T-cell (primary cell): ENCODE measurements at regions of chr2 and their contacts with region 1.

Region 1: DNA sequence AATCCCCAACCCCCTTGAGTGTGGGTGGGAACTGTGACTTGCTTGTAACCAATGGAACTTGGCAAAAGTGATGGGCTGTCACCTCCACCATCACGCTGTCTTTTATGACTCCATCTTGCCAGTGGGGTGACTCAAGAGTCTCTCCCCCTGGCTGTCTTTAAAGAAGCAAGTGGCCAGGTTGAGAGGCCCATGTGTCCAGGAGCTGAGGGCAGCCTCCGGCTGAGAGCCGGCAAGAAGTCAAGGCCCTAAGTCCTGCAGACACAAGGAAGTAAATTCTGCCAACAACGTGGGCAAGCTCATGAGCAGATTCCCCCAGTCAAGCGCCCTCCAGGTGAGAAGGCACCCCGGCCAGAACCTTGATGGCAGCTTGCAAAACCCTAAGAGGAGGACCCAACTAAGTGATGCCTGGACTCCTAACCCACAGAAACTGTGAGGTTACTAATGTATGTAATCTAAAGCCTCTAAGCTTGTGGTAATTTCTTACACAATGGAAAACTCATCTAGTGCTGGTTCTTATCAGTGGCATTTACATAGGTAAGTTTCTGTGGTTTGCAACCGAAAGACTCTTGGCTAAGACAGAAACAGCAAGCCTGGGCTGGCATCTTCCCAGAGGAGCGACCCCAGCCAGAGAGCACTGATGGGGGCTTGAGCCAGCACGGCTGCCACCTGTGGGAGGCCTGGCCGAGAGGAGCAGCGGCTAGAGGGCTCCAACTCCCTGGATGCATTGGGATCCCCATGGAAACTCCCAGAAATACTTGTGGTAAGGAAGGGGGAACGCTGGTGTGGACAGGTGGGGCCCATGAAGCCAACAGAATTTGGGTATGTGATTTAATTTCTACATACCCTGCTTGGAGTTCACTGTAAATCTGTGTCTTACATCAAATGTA is 49.3 kb downstream of the CIB4 start:
- DNase-seq: peak in 1 of 35 experiments; percentile 7
- ATAC-seq: no peak
- H3K4me3 ChIP-seq: no peak overlapping the region
- H3K4me3 Mint-ChIP-seq: no peak overlapping the region
- H3K27ac ChIP-seq: no peak overlapping the region
- H3K27ac Mint-ChIP-seq: no peak overlapping the region
- H3K4me1 ChIP-seq: peaks cover 0 to 3% of the 10 kb centered on the region in 2 experiments
- H3K4me1 Mint-ChIP-seq: peaks cover 0 to 3% (median 0%) of the 10 kb centered on the region in 3 donors
- H3K27me3 ChIP-seq: peaks cover 0 to 35% of the 10 kb centered on the region in 2 experiments
- H3K27me3 Mint-ChIP-seq: peaks cover 19 to 28% of the 10 kb centered on the region in 2 donors

Region 2: GRCh38 chr2:26195040-26195984 is 396.6 kb before region 1 on chr2:
- CTCF ChIA-PET with region 1: no interaction called
- POLR2A ChIA-PET with region 1: interaction called in 1 of 2 experiments, 10 read pairs
- DNase-seq: no peak
- ATAC-seq: no peak
- H3K4me3 ChIP-seq: no peak overlapping the region
- H3K4me3 Mint-ChIP-seq: no peak overlapping the region
- H3K27ac ChIP-seq: no peak overlapping the region
- H3K27ac Mint-ChIP-seq: peak overlapping the region; percentile 8 to 13
- H3K4me1 ChIP-seq: no peaks in the 10 kb centered on the region
- H3K4me1 Mint-ChIP-seq: no peaks in the 10 kb centered on the region
- H3K27me3 ChIP-seq: no peaks in the 10 kb centered on the region
- H3K27me3 Mint-ChIP-seq: no peaks in the 10 kb centered on the region

Region 3: DNA sequence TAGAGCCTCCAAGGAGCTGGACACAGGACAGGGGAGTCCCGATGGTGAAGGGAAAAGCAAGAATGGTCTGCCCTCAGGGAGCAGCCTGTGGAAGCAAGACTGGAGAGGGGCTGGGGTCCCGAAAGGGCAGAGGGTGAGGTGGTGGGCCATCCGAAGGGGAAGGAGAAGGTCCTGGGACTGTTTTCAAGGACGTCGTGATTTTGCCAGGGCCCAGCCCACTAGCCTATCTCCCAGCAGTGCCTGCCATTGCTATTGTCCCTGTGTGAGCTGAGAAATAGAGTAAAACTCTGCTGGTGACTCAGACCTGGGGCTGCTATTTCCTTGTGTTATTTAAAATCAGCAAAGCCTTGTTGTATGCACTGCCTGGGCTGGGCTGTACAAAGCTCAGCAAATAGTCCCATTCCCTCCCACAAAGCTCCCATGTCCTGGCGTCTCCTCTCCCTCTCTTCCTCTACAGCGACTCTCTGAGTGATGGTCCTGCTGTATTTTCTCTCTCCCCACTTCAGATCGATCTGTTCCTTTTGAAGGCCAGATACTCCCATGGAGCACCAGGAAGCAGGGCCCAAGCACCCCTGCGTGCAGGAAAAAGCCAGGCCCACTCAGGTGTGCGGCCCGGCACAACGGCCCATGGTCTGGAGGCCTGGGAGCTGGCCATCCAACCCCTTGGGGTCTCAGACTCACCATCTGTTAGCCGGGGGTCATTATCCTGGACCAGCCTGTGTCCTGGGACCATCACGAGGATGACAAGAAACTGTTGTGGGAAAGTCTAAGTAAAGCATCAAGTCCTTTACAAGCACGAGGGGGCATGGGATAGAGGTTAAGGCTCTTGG is 49.0 kb before region 1 on chr2:
- CTCF ChIA-PET with region 1: no interaction called
- POLR2A ChIA-PET with region 1: no interaction called
- DNase-seq: no peak
- ATAC-seq: no peak
- H3K4me3 ChIP-seq: no peak overlapping the region
- H3K4me3 Mint-ChIP-seq: no peak overlapping the region
- H3K27ac ChIP-seq: no peak overlapping the region
- H3K27ac Mint-ChIP-seq: no peak overlapping the region
- H3K4me1 ChIP-seq: no peaks in the 10 kb centered on the region
- H3K4me1 Mint-ChIP-seq: no peaks in the 10 kb centered on the region
- H3K27me3 ChIP-seq: peaks cover 0 to 14% of the 10 kb centered on the region in 2 experiments
- H3K27me3 Mint-ChIP-seq: peaks cover 1 to 6% of the 10 kb centered on the region in 2 donors

Region 4: DNA sequence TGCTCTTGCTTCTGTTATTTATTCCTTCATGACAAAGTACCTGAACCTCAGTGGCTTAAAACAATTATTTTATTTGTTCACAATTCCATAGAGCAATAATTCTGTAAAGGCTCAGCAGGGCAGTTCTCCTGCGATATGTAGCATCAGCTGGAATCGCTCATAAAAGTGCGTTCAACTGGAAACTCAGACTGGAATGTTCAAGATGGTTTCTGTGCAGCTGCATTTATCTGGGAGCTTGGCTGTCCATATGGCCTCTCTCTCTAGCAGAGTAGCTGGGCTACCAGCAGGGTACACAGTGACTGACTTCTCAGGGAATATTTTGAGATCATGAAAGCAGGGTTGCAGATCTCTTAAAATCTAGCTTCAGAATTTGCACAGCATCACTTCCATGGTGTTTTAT is 1023.5 kb after region 1 on chr2:
- CTCF ChIA-PET with region 1: no interaction called
- POLR2A ChIA-PET with region 1: no interaction called
- DNase-seq: no peak
- ATAC-seq: no peak
- H3K4me3 ChIP-seq: no peak overlapping the region
- H3K4me3 Mint-ChIP-seq: no peak overlapping the region
- H3K27ac ChIP-seq: no peak overlapping the region
- H3K27ac Mint-ChIP-seq: no peak overlapping the region
- H3K4me1 ChIP-seq: no peaks in the 10 kb centered on the region
- H3K4me1 Mint-ChIP-seq: peaks cover 3 to 10% (median 4%) of the 10 kb centered on the region in 3 donors
- H3K27me3 ChIP-seq: no peaks in the 10 kb centered on the region
- H3K27me3 Mint-ChIP-seq: no peaks in the 10 kb centered on the region